IMR-90 (cell line): ENCODE measurements at regions of chr12 and their contacts with region 1.

Region 1: GRCh38 chr12:16359512-16360491 is 12.4 kb downstream of the MGST1 start:
- DNase-seq: peak; percentile 47
- ATAC-seq: 0 out of 2 replicates have a peak, but pooled peaks have one; percentile 48
- H3K4me3 ChIP-seq: no peak overlapping the region
- H3K27ac ChIP-seq: no peak overlapping the region
- H3K4me1 ChIP-seq: peaks cover 2% of the 10 kb centered on the region; the same call in 1 of the 2 replicates
- H3K27me3 ChIP-seq: no peaks in the 10 kb centered on the region
- CTCF ChIP-seq: peak; percentile 63
- POLR2A ChIP-seq: no peak
- RAD21 ChIP-seq: peak; percentile 70

Region 2: GRCh38 chr12:15996254-15996653 is 363.5 kb before region 1 on chr12:
- CTCF ChIA-PET with region 1: no interaction called
- POLR2A ChIA-PET with region 1: no interaction called
- dilution Hi-C with region 1: no loop called
- in situ Hi-C with region 1: loop called (anchors 10 kb)
- intact Hi-C with region 1: no loop called
- DNase-seq: peak; percentile 41
- ATAC-seq: peak; percentile 71
- H3K4me3 ChIP-seq: no peak overlapping the region
- H3K27ac ChIP-seq: no peak overlapping the region
- H3K4me1 ChIP-seq: peaks cover 7% of the 10 kb centered on the region; the same call in 1 of the 2 replicates
- H3K27me3 ChIP-seq: no peaks in the 10 kb centered on the region
- CTCF ChIP-seq: no peak
- POLR2A ChIP-seq: no peak
- RAD21 ChIP-seq: 0 out of 2 replicates have a peak, but pooled peaks have one; percentile 13

Region 3: DNA sequence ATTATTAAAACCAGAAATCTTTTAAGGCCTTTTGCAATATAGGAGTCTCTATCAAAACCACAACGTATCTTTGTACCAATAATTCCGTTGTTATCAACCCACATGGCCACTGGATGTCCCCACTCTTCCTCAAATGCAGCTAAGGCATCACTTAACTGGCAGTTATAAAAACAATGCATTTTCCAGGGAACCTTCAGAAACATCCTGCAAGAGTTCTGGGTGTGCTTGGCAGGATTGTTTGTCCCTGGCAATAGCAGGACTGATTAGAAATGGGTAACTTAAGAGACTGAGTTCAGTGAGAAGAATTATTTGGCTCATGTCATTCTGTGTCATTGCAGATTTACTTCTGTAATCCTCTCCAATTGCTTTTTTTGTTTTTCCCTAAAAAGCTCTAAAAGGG is 194.3 kb before region 1 on chr12:
- CTCF ChIA-PET with region 1: no interaction called
- POLR2A ChIA-PET with region 1: no interaction called
- dilution Hi-C with region 1: no loop called
- in situ Hi-C with region 1: no loop called
- intact Hi-C with region 1: loop called (anchors 1 kb)
- DNase-seq: peak; percentile 47
- ATAC-seq: peak; percentile 80
- H3K4me3 ChIP-seq: no peak overlapping the region
- H3K27ac ChIP-seq: no peak overlapping the region
- H3K4me1 ChIP-seq: no peaks in the 10 kb centered on the region
- H3K27me3 ChIP-seq: no peaks in the 10 kb centered on the region; the same call in 1 of the 2 replicates
- CTCF ChIP-seq: peak; percentile 68
- POLR2A ChIP-seq: no peak
- RAD21 ChIP-seq: peak; percentile 78

Region 4: DNA sequence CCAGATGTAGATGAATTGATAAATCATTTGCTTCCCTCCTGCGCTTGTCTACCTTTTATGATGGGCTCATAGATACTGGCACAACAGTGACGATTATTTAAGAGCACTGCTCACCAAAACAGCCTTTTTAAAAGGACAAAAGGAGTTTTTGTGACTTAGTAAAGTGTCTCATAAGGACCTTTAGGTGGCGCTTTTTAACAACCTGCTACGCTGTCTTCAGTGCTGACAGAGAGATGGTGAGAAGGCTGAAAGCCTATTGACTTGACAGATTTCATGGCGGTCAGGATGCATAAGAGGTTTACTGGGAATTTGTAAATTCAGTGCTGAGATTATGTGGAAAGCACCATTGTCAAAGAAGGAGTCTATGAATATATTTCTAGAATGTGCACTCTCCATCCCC is 170.0 kb before region 1 on chr12:
- CTCF ChIA-PET with region 1: no interaction called
- POLR2A ChIA-PET with region 1: no interaction called
- dilution Hi-C with region 1: no loop called
- in situ Hi-C with region 1: no loop called
- intact Hi-C with region 1: loop called (anchors 10 kb)
- DNase-seq: peak; percentile 28
- ATAC-seq: peak; percentile 49; the same call in 1 of the 2 replicates
- H3K4me3 ChIP-seq: no peak overlapping the region
- H3K27ac ChIP-seq: no peak overlapping the region
- H3K4me1 ChIP-seq: no peaks in the 10 kb centered on the region
- H3K27me3 ChIP-seq: peaks cover 1% of the 10 kb centered on the region; the same call in 1 of the 2 replicates
- CTCF ChIP-seq: peak; percentile 43
- POLR2A ChIP-seq: no peak
- RAD21 ChIP-seq: peak; percentile 51

Region 5: DNA sequence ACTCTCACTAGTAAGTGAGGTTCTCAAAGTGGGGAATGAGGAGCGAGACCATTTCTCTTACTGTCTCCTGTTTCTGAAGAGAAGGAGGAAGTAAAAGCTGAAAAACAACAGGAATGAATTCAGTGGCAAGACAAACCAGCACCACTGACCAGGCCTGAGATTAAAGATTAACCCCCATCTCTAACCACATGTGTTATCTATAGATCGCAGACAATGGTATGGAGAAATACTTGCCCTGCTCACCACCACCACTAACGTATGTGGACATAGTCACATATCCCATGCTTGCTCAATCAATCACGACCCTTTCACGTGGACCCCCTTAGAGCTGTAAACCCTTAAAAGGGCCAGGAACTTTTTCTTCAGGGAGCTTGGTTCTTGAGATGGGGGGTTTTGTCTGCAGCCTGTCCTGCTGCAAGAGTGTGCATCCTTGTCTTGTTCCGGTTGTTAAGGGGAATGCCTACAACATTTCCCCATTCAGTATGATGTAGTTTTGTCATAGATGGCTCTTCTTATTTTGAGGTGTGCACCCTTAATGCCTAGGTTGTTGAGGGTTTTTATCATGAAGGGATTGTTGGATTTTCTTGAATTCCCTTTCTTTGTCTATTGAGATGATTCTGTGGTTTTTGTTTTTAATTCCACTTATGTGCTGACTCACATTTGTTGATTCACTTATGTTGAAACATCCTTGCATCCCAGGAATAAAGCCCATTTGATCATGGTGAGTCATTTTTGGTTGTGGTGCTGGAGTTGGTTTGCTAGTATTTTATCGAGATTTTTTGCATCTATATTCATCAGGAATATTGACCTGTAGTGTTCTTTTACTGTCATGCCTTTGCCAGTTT is 944.9 kb after region 1 on chr12:
- CTCF ChIA-PET with region 1: no interaction called
- POLR2A ChIA-PET with region 1: no interaction called
- dilution Hi-C with region 1: no loop called
- in situ Hi-C with region 1: no loop called
- intact Hi-C with region 1: no loop called
- DNase-seq: no peak
- ATAC-seq: no peak
- H3K4me3 ChIP-seq: no peak overlapping the region
- H3K27ac ChIP-seq: no peak overlapping the region
- H3K4me1 ChIP-seq: no peaks in the 10 kb centered on the region
- H3K27me3 ChIP-seq: no peaks in the 10 kb centered on the region
- CTCF ChIP-seq: no peak
- POLR2A ChIP-seq: no peak
- RAD21 ChIP-seq: no peak